H1 (cell line): ENCODE measurements at regions of chr3 and their contacts with region 1.

Region 1: DNA sequence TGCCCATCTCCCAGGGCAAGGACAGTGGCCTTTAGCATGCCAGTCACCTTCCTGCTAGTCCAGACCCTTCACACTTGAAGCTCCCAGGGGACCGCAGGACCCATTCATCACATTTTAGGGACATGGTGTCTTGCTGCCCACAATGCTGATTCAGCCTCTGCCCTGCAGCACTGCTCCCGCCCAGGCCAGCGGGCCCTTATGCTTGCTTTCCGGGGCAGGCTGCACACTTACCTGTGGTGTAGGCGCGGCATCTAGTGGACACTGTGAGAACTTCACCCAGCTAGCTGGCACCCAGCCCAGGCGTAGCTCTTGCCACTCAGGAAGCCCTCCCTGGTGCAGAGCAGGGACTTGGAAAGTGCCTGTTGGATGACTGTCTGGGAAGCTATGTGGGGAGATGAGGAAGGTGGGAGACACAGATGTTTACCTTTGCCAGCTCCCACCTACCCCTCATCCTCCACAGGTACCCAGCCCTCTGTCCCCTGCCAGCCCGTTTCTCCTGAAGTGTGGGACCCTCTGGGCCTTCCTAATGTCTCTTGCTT is 26.2 kb upstream of the NR2C2 start:
- DNase-seq: peak; percentile 76 to 95
- H3K4me3 ChIP-seq: no peak overlapping the region
- H3K27ac ChIP-seq: no peak overlapping the region
- H3K4me1 ChIP-seq: peaks cover 0 to 9% (median 1%) of the 10 kb centered on the region in 4 experiments; a peak in 4 of 7 replicates
- H3K27me3 ChIP-seq: no peaks in the 10 kb centered on the region
- CTCF ChIP-seq: peak in 2 of 3 experiments; percentile 97 to 99; a peak in 3 of 4 replicates
- EP300 ChIP-seq: peak in 1 of 2 experiments; percentile 22; a peak in 1 of 3 replicates
- POLR2A ChIP-seq: no peak
- RAD21 ChIP-seq: peak; percentile 99 to 100

Region 2: DNA sequence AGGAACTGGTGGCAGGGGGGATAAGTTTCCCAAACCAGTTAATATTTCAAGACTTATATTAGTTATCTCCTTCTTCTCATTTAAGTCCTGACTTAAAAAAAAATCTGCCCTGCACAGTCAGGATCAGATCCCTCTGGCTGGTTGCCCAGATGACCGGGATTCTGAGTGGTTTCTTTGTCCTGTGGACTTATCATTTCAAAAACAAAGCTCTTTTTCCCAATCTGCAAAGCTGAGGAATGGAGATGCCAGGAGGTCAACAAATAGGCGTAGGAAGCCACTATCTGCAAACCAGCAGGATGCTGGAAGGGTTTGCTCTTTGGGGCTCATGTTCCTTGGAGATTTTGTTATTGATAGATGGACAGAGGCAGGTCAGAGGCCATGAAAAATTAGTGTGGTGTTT is 240.4 kb before region 1 on chr3:
- CTCF ChIA-PET with region 1: interaction called, 82 read pairs
- POLR2A ChIA-PET with region 1: no interaction called
- DNase-seq: no peak
- H3K4me3 ChIP-seq: no peak overlapping the region
- H3K27ac ChIP-seq: no peak overlapping the region
- H3K4me1 ChIP-seq: no peaks in the 10 kb centered on the region
- H3K27me3 ChIP-seq: no peaks in the 10 kb centered on the region
- CTCF ChIP-seq: no peak
- EP300 ChIP-seq: no peak
- POLR2A ChIP-seq: no peak
- RAD21 ChIP-seq: no peak

Region 3: GRCh38 chr3:14814488-14814887 is 106.7 kb before region 1 on chr3:
- CTCF ChIA-PET with region 1: interaction called, 11 read pairs
- POLR2A ChIA-PET with region 1: interaction called, 3 read pairs
- DNase-seq: no peak
- H3K4me3 ChIP-seq: no peak overlapping the region
- H3K27ac ChIP-seq: no peak overlapping the region
- H3K4me1 ChIP-seq: peaks cover 0 to 6% (median 3%) of the 10 kb centered on the region in 4 experiments; a peak in 4 of 7 replicates
- H3K27me3 ChIP-seq: peaks cover 7 to 29% (median 24%) of the 10 kb centered on the region in 4 experiments; a peak in 6 of 7 replicates
- CTCF ChIP-seq: no peak
- EP300 ChIP-seq: no peak
- POLR2A ChIP-seq: no peak
- RAD21 ChIP-seq: no peak

Region 4: DNA sequence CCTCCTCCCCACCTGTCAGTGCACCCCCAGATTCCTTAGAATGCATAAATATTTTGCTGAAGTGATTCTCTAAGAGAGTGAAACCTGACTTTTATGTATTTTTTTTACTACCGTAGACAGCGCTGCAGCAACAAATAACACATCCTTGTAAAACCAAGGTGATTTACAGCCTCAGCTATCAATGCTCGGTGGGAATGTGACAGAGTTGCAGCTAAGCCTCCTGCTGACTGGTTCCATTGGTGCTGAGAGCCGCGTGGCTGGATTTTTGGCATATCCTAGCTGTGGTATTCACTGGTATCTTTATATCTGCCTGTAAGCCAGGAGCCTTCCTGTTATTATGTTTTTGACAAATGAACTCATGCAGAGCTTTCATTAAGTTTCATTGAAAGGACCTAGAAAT is 91.3 kb before region 1 on chr3:
- CTCF ChIA-PET with region 1: interaction called, 10 read pairs
- POLR2A ChIA-PET with region 1: no interaction called
- DNase-seq: no peak
- H3K4me3 ChIP-seq: no peak overlapping the region
- H3K27ac ChIP-seq: no peak overlapping the region
- H3K4me1 ChIP-seq: peaks cover 0 to 4% (median 2%) of the 10 kb centered on the region in 4 experiments; a peak in 4 of 7 replicates
- H3K27me3 ChIP-seq: no peaks in the 10 kb centered on the region
- CTCF ChIP-seq: no peak
- EP300 ChIP-seq: no peak
- POLR2A ChIP-seq: no peak
- RAD21 ChIP-seq: no peak

Region 5: GRCh38 chr3:14863333-14864100 is 57.6 kb before region 1 on chr3:
- CTCF ChIA-PET with region 1: interaction called, 54 read pairs
- POLR2A ChIA-PET with region 1: no interaction called
- DNase-seq: peak in 1 of 2 experiments; percentile 21
- H3K4me3 ChIP-seq: no peak overlapping the region
- H3K27ac ChIP-seq: no peak overlapping the region
- H3K4me1 ChIP-seq: peaks cover 4 to 16% (median 13%) of the 10 kb centered on the region in 4 experiments
- H3K27me3 ChIP-seq: no peaks in the 10 kb centered on the region
- CTCF ChIP-seq: peak; percentile 65 to 82 (median 80)
- EP300 ChIP-seq: no peak
- POLR2A ChIP-seq: no peak
- RAD21 ChIP-seq: peak; percentile 51 to 63

Region 6: GRCh38 chr3:14947886-14948555 is 26.9 kb after region 1 on chr3:
- CTCF ChIA-PET with region 1: interaction called, 17 read pairs
- POLR2A ChIA-PET with region 1: interaction called, 11 read pairs
- DNase-seq: peak; percentile 89 to 96
- H3K4me3 ChIP-seq: peak overlapping the region; percentile 92 to 99 (median 95)
- H3K27ac ChIP-seq: peak overlapping the region; percentile 97
- H3K4me1 ChIP-seq: peaks cover 3 to 10% (median 4%) of the 10 kb centered on the region in 4 experiments; a peak in 4 of 7 replicates
- H3K27me3 ChIP-seq: no peaks in the 10 kb centered on the region
- CTCF ChIP-seq: no peak
- EP300 ChIP-seq: no peak
- POLR2A ChIP-seq: peak in 1 of 2 experiments; percentile 71; a peak in 1 of 3 replicates
- RAD21 ChIP-seq: no peak

Region 7: DNA sequence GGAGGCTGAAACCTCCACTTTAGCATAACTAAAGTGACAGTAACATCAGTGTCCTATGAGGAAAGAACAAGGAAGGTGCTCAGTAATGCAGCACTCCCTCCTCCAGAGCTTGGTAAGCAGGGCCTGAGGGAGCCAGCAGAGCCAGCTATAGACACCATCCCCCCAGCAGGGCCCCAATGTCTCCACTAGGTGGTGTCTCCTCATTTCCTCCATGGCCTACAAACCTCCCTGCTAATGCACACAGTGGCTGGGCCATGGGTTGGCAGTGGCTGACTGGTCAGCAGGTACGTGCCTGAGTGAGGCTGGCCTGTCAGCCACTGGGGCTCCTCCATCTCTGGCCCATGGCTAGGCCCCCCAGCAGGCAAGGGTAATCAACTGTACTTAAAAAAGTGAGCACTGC is 130.4 kb after region 1 on chr3:
- CTCF ChIA-PET with region 1: interaction called, 10 read pairs
- POLR2A ChIA-PET with region 1: no interaction called
- DNase-seq: peak; percentile 36 to 81
- H3K4me3 ChIP-seq: no peak overlapping the region
- H3K27ac ChIP-seq: no peak overlapping the region
- H3K4me1 ChIP-seq: peaks cover 0 to 2% (median 0%) of the 10 kb centered on the region in 4 experiments; a peak in 2 of 7 replicates
- H3K27me3 ChIP-seq: no peaks in the 10 kb centered on the region
- CTCF ChIP-seq: peak; percentile 80 to 96 (median 81)
- EP300 ChIP-seq: no peak
- POLR2A ChIP-seq: peak in 1 of 2 experiments; percentile 57; a peak in 2 of 3 replicates
- RAD21 ChIP-seq: peak; percentile 49 to 63

Region 8: GRCh38 chr3:15241341-15241740 is 320.2 kb after region 1 on chr3:
- CTCF ChIA-PET with region 1: no interaction called
- POLR2A ChIA-PET with region 1: no interaction called
- DNase-seq: no peak
- H3K4me3 ChIP-seq: no peak overlapping the region
- H3K27ac ChIP-seq: no peak overlapping the region
- H3K4me1 ChIP-seq: no peaks in the 10 kb centered on the region
- H3K27me3 ChIP-seq: no peaks in the 10 kb centered on the region
- CTCF ChIP-seq: peak; percentile 39 to 49 (median 45)
- EP300 ChIP-seq: no peak
- POLR2A ChIP-seq: no peak
- RAD21 ChIP-seq: peak; percentile 54 to 68

Region 9: DNA sequence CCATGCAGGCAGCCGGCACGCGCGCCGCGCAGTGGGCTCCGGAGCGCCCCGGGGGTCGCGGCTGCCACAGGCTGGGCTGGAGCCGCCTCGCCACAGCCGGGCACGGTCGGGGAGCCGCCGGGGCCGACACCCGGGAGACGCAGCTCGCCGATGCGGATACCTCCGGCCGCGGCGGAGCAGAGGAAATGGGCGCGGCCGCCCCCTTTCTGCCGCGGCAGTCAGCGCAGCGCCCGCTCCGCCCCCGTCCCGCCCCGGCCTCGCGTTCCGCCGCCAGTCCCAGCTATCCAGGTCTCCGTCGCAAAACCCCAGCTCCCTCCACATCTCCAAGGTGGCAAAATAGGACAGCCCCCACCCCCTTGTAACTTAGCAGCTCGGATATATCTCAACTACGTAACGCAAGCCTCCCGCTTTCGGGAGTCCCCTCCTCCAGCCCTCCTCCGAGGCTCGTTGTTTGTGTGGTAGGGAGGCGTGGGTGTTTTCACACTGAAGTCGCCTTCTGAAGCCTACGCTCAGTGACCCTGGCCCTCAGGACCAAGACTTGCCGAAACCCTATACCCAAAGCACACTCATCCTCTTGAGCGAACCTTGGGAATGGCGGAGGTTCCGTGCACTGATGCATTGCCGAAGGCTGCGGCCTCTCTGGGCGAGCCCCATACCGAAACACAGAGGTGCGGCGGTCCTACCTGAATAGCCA is 411.4 kb after region 1 on chr3 and contains the start of gene SH3BP5:
- CTCF ChIA-PET with region 1: no interaction called
- POLR2A ChIA-PET with region 1: no interaction called
- DNase-seq: peak in 1 of 2 experiments; percentile 87
- H3K4me3 ChIP-seq: peak within 1 kb of the TSS; percentile 65 to 92 (median 84)
- H3K27ac ChIP-seq: no peak within 1 kb of the TSS; the same call in 1 of the 2 replicates
- H3K4me1 ChIP-seq: peaks cover 0 to 11% (median 9%) of the 10 kb centered on the region in 4 experiments; a peak in 6 of 7 replicates
- H3K27me3 ChIP-seq: peaks cover 1 to 20% (median 10%) of the 10 kb centered on the region in 4 experiments; a peak in 6 of 7 replicates
- CTCF ChIP-seq: peak; percentile 57 to 72 (median 63)
- EP300 ChIP-seq: no peak
- POLR2A ChIP-seq: no peak
- RAD21 ChIP-seq: peak; percentile 37 to 51
- total RNA-seq, gene SH3BP5: 9.4 and 9.7 TPM in 2 replicates